CD4-positive, alpha-beta T cell (primary cell): ENCODE measurements at regions of chr7 and their contacts with region 1.

Region 1: GRCh38 chr7:83987764-83988163 is 206.8 kb downstream of the SEMA3A start:
- DNase-seq: no peak
- ATAC-seq: no peak
- H3K4me3 ChIP-seq: no peak overlapping the region
- H3K4me3 Mint-ChIP-seq: no peak overlapping the region
- H3K27ac ChIP-seq: no peak overlapping the region
- H3K27ac Mint-ChIP-seq: no peak overlapping the region
- H3K4me1 ChIP-seq: no peaks in the 10 kb centered on the region
- H3K4me1 Mint-ChIP-seq: no peaks in the 10 kb centered on the region
- H3K27me3 ChIP-seq: no peaks in the 10 kb centered on the region
- H3K27me3 Mint-ChIP-seq: no peaks in the 10 kb centered on the region
- CTCF ChIP-seq: no peak

Region 2: DNA sequence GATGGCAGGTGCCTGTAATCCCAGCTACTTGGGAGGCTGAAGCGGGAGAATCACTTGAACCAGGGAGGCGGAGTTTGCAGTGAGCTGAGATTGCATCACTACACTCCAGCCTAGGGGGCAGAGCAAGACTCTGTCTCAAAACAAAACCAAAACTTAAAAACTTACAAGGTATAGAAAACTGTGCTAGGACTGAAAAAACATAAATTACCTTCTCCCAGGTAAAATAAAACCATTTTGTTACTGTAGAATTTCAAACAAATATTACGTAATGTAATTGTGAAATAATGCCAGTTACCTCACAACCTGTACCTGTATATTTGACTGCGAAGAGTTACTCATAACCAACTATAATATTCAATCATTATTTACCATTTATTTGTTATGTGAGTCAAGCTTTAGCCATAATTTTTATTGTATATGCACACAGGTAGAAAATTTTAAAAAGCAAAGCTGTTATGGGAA is 26.0 kb after region 1 on chr7:
- CTCF ChIA-PET with region 1: no interaction called
- POLR2A ChIA-PET with region 1: no interaction called
- intact Hi-C with region 1: loop called in 1 of 2 experiments (anchors 1 kb)
- DNase-seq: no peak
- ATAC-seq: no peak
- H3K4me3 ChIP-seq: no peak overlapping the region
- H3K4me3 Mint-ChIP-seq: no peak overlapping the region
- H3K27ac ChIP-seq: no peak overlapping the region
- H3K27ac Mint-ChIP-seq: no peak overlapping the region
- H3K4me1 ChIP-seq: no peaks in the 10 kb centered on the region
- H3K4me1 Mint-ChIP-seq: no peaks in the 10 kb centered on the region
- H3K27me3 ChIP-seq: no peaks in the 10 kb centered on the region
- H3K27me3 Mint-ChIP-seq: no peaks in the 10 kb centered on the region
- CTCF ChIP-seq: no peak